Activated T-helper 1 cell treated with anti-CD3 and anti-CD28 coated beads, Interleukin-12 subunit alpha, Interleukin-12 subunit beta, Interleukin-2, Interleukin-4 antibody, amounts not matched to agents 30 ng/mL and 10 ng/mL and 1 ng/mL, durations not matched to agents 14 hours and 24 hours and 36 hours (primary cell): ENCODE measurements at regions of chr16 and their contacts with region 1.

Region 1: GRCh38 chr16:4475880-4476788 is at the start of gene HMOX2:
- DNase-seq: peak; percentile 93
- H3K4me3 Mint-ChIP-seq: peak within 1 kb of the TSS; percentile 89
- H3K27ac Mint-ChIP-seq: peak within 1 kb of the TSS; percentile 89
- H3K4me1 Mint-ChIP-seq: peaks cover 21% of the 10 kb centered on the region
- H3K27me3 Mint-ChIP-seq: no peaks in the 10 kb centered on the region
- total RNA-seq, gene HMOX2: 64.7 and 68.4 TPM in 2 replicates

Region 2: DNA sequence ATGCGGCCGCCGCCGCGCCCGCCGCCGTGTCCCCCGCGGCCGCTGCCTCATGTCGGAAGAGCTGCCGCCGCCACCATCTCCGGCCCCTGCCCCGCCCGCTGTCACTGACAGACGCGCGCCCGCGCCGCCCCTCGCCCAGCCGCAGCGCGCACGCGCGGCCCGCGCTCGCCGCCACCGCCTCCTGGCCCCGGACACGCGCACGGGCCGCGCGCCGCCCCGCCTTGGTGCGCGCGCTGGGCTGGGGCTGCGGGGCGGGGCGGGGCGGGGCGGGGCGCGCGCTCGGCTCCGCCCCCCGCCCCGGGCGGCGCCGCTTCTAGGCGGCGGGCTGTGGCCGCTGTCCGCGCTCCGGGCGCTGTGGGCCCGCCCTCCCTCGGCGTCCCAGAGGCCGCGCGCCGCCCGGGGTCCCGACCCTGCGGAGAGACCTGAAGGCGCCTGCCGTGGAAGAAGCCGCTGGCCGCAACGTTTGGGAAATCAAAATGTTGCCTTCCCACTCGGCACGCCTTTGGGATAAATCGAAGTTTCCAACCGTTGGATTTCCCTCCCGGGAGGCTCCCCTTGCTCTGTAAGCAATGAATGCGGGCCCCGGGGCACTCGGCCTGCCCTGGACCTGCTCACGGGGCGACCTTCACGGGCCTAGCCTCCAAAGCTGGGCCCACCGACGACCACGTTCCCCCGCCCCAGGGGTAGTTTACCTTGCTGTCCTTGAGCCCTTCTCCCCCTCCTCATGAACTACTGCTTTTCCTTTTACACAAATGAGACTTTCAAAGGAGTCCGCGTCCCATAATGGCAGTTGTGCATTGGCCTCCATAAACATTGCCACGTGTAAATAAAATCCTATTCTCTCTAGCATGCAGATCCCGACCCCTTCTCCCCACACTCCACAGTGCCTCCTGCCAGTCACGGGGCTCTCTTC is 359.5 kb before region 1 on chr16 and contains the start of gene ADCY9:
- intact Hi-C with region 1: loop called (anchors 2 kb)
- DNase-seq: peak; percentile 84
- H3K4me3 Mint-ChIP-seq: peak within 1 kb of the TSS; percentile 82
- H3K27ac Mint-ChIP-seq: peak within 1 kb of the TSS; percentile 64
- H3K4me1 Mint-ChIP-seq: peaks cover 41% of the 10 kb centered on the region
- H3K27me3 Mint-ChIP-seq: peaks cover 14% of the 10 kb centered on the region
- total RNA-seq, gene ADCY9: 9.4 and 9.7 TPM in 2 replicates

Region 3: DNA sequence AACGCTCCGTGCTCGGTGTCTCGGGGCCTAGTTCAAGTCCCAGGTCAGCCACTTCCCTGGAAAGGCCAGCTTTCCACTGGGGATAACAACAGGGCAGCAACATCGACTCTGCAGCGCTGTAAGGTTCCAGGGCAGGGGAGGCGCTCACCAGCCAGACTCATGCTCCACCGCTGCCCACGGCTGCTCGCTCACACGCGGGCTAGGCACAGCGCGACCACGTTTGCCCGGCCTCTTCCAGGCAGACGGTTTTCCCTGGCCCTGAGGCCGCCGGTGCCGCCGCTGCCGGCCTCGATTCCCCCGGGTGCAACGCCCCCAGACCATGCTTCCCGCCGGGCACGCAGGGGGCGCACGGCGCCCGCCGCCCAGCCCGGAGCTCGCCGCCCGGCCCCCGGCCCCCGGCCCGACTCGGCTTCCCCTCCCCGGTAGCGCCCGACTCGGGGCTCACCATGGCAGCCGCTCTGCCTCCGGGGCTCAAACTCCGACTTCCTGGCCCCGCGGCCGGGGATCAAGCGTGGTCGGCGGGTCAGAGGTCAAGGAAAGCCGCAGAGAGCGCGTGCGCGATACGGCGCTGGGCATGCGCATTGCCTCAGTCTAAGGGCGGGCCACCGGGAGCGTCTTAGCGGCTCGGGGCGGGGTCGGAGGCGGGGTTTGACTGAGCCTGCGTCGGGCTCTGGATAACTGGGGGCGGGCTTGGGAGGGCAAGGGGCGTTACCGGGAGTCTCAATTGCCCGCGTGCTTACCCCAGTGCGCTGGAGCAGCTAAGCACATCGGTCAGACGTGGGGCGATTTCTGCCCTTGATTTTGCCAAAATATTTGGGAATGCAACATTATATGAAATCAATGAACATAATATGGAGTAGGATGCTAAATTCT is 125.1 kb before region 1 on chr16 and contains the start of gene PAM16:
- intact Hi-C with region 1: loop called (anchors 1 kb)
- DNase-seq: peak; percentile 99
- H3K4me3 Mint-ChIP-seq: peak within 1 kb of the TSS; percentile 97
- H3K27ac Mint-ChIP-seq: peak within 1 kb of the TSS; percentile 93
- H3K4me1 Mint-ChIP-seq: peaks cover 13% of the 10 kb centered on the region
- H3K27me3 Mint-ChIP-seq: no peaks in the 10 kb centered on the region
- total RNA-seq, gene PAM16: 91.5 and 106 TPM in 2 replicates

Region 4: GRCh38 chr16:4487955-4488498 is 11.9 kb after region 1 on chr16:
- intact Hi-C with region 1: loop called (anchors 1 kb)
- DNase-seq: no peak
- H3K4me3 Mint-ChIP-seq: peak overlapping the region; percentile 48
- H3K27ac Mint-ChIP-seq: peak overlapping the region; percentile 76
- H3K4me1 Mint-ChIP-seq: peaks cover 45% of the 10 kb centered on the region
- H3K27me3 Mint-ChIP-seq: no peaks in the 10 kb centered on the region

Region 5: GRCh38 chr16:4548124-4548523 is 72.0 kb after region 1 on chr16:
- intact Hi-C with region 1: loop called (anchors 1 kb)
- DNase-seq: no peak
- H3K4me3 Mint-ChIP-seq: no peak overlapping the region
- H3K27ac Mint-ChIP-seq: no peak overlapping the region
- H3K4me1 Mint-ChIP-seq: peaks cover 10% of the 10 kb centered on the region
- H3K27me3 Mint-ChIP-seq: peaks cover 16% of the 10 kb centered on the region

Region 6: DNA sequence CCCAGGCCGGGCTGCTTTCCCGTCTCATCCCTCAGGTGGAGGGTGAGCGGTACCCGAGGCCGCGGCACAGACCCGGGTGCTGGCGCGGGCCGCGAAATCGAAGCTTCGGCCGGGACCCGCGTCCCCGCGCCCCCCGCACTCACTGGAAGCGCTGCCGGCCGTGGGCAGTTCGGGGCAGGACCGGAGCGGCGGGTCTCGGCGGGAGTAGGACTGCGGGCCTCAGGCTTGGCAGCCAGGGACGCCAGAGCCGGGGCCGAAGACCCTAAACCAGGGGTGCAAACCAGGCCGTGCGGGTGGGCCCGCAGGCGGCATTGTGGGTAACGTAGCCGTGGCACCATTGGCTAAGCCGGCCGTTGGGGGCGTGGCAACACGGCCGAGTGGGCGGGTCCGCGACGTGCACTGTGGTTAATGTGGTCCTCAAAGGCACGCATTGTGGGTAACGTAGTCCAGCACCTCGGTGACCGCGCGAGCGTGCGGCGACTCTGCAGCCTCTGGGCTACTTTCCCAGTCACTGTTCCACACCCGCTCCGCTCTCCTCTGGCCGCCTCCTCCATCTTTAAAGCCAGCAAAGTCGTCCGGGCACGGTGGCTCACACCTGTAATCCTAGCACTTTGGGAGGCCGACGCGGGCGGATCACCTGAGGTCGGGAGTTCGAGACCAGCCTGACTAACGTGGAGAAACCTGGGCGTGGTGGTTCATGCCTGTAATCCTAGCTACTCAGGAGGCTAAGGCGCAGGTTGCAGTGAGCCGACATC is 290.9 kb after region 1 on chr16 and contains the start of gene ZNF500:
- intact Hi-C with region 1: loop called (anchors 1 kb)
- DNase-seq: peak; percentile 96
- H3K4me3 Mint-ChIP-seq: peak within 1 kb of the TSS; percentile 95
- H3K27ac Mint-ChIP-seq: peak within 1 kb of the TSS; percentile 87
- H3K4me1 Mint-ChIP-seq: peaks cover 20% of the 10 kb centered on the region
- H3K27me3 Mint-ChIP-seq: no peaks in the 10 kb centered on the region
- total RNA-seq, gene ZNF500: 16.6 and 17.4 TPM in 2 replicates